CD4-positive, alpha-beta memory T cell (primary cell): ENCODE measurements at regions of chr20 and their contacts with region 1.

Region 1: GRCh38 chr20:13784893-13785715 is at the starts of genes ESF1 and NDUFAF5:
- DNase-seq: peak; percentile 92 to 95 (median 92)
- H3K4me3 ChIP-seq: peak within 1 kb of the TSS; percentile 91 to 97
- H3K4me3 Mint-ChIP-seq: peak within 1 kb of the TSS; percentile 98 to 100 (median 100)
- H3K27ac ChIP-seq: peak within 1 kb of the TSS; percentile 77
- H3K27ac Mint-ChIP-seq: peak within 1 kb of the TSS; percentile 90 to 99 (median 99)
- H3K4me1 ChIP-seq: peaks cover 27% of the 10 kb centered on the region
- H3K4me1 Mint-ChIP-seq: peaks cover 25 to 67% (median 47%) of the 10 kb centered on the region in 4 donors
- H3K27me3 ChIP-seq: no peaks in the 10 kb centered on the region
- H3K27me3 Mint-ChIP-seq: no peaks in the 10 kb centered on the region
- total RNA-seq, gene ESF1: 13.5 to 13.8 TPM
- total RNA-seq, gene NDUFAF5: 23.6 to 26.8 TPM

Region 2: DNA sequence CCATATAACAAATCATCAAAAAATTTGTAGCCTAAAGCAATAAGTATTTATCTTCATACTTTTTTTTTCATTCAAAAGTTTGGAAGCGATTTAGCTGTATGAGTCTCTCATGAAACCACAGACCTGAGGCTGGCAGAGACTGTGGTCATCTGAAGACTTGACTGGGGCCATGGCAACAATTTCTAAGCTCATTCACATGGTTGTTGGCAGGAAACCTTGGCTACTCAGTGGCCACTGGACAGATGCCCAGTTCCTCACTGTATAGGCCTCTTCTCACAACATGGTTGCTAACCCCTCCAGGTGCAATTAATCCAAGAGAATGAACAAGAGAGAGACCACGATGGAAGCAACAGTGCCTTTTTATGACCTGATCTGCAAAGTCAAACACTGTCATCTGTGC is 1631.5 kb before region 1 on chr20:
- CTCF ChIA-PET with region 1: no interaction called
- POLR2A ChIA-PET with region 1: no interaction called
- intact Hi-C with region 1: no loop called
- DNase-seq: peak in 1 of 5 donors; percentile 2
- H3K4me3 ChIP-seq: no peak overlapping the region
- H3K4me3 Mint-ChIP-seq: no peak overlapping the region
- H3K27ac ChIP-seq: no peak overlapping the region
- H3K27ac Mint-ChIP-seq: no peak overlapping the region
- H3K4me1 ChIP-seq: no peaks in the 10 kb centered on the region
- H3K4me1 Mint-ChIP-seq: no peaks in the 10 kb centered on the region
- H3K27me3 ChIP-seq: no peaks in the 10 kb centered on the region
- H3K27me3 Mint-ChIP-seq: no peaks in the 10 kb centered on the region

Region 3: GRCh38 chr20:12925214-12925755 is 859.8 kb before region 1 on chr20:
- CTCF ChIA-PET with region 1: no interaction called
- POLR2A ChIA-PET with region 1: no interaction called
- intact Hi-C with region 1: loop called (anchors 5 kb)
- DNase-seq: peak in 3 of 5 donors; percentile 2 to 42 (median 11)
- H3K4me3 ChIP-seq: no peak overlapping the region
- H3K4me3 Mint-ChIP-seq: no peak overlapping the region
- H3K27ac ChIP-seq: no peak overlapping the region
- H3K27ac Mint-ChIP-seq: no peak overlapping the region
- H3K4me1 ChIP-seq: no peaks in the 10 kb centered on the region
- H3K4me1 Mint-ChIP-seq: peaks cover 0 to 3% (median 0%) of the 10 kb centered on the region in 4 donors
- H3K27me3 ChIP-seq: no peaks in the 10 kb centered on the region
- H3K27me3 Mint-ChIP-seq: peaks cover 0 to 2% of the 10 kb centered on the region in 2 donors

Region 4: GRCh38 chr20:13221673-13222318 is 563.3 kb before region 1 on chr20:
- CTCF ChIA-PET with region 1: no interaction called
- POLR2A ChIA-PET with region 1: no interaction called
- intact Hi-C with region 1: loop called (anchors 10 kb)
- DNase-seq: peak; percentile 73 to 80 (median 78)
- H3K4me3 ChIP-seq: peak overlapping the region; percentile 52 to 60
- H3K4me3 Mint-ChIP-seq: peak overlapping the region; percentile 85 to 95 (median 88)
- H3K27ac ChIP-seq: peak overlapping the region; percentile 43
- H3K27ac Mint-ChIP-seq: peak overlapping the region; percentile 71 to 93 (median 89)
- H3K4me1 ChIP-seq: peaks cover 20% of the 10 kb centered on the region
- H3K4me1 Mint-ChIP-seq: peaks cover 7 to 31% (median 16%) of the 10 kb centered on the region in 4 donors
- H3K27me3 ChIP-seq: peaks cover 12% of the 10 kb centered on the region
- H3K27me3 Mint-ChIP-seq: peaks cover 6 to 20% of the 10 kb centered on the region in 2 donors

Region 5: GRCh38 chr20:13458860-13459451 is 326.1 kb before region 1 on chr20:
- CTCF ChIA-PET with region 1: no interaction called
- POLR2A ChIA-PET with region 1: no interaction called
- intact Hi-C with region 1: loop called (anchors 10 kb)
- DNase-seq: peak in 1 of 5 donors; percentile 0
- H3K4me3 ChIP-seq: no peak overlapping the region
- H3K4me3 Mint-ChIP-seq: no peak overlapping the region
- H3K27ac ChIP-seq: no peak overlapping the region
- H3K27ac Mint-ChIP-seq: no peak overlapping the region
- H3K4me1 ChIP-seq: no peaks in the 10 kb centered on the region
- H3K4me1 Mint-ChIP-seq: no peaks in the 10 kb centered on the region
- H3K27me3 ChIP-seq: no peaks in the 10 kb centered on the region
- H3K27me3 Mint-ChIP-seq: no peaks in the 10 kb centered on the region

Region 6: GRCh38 chr20:13638496-13639222 is 146.4 kb before region 1 on chr20 and contains the start of gene TASP1:
- CTCF ChIA-PET with region 1: interaction called, 3 read pairs
- POLR2A ChIA-PET with region 1: interaction called, 5 read pairs
- intact Hi-C with region 1: loop called (anchors 1 kb)
- DNase-seq: peak; percentile 94 to 98 (median 96)
- H3K4me3 ChIP-seq: peak within 1 kb of the TSS; percentile 59 to 90
- H3K4me3 Mint-ChIP-seq: peak within 1 kb of the TSS; percentile 84 to 93 (median 89)
- H3K27ac ChIP-seq: peak within 1 kb of the TSS; percentile 66
- H3K27ac Mint-ChIP-seq: peak within 1 kb of the TSS; percentile 84 to 95 (median 90)
- H3K4me1 ChIP-seq: peaks cover 14% of the 10 kb centered on the region
- H3K4me1 Mint-ChIP-seq: peaks cover 15 to 27% (median 17%) of the 10 kb centered on the region in 4 donors
- H3K27me3 ChIP-seq: no peaks in the 10 kb centered on the region
- H3K27me3 Mint-ChIP-seq: peaks cover 3 to 14% of the 10 kb centered on the region in 2 donors
- total RNA-seq, gene TASP1: 15.1 to 15.2 TPM

Region 7: GRCh38 chr20:13771853-13772453 is 13.2 kb before region 1 on chr20:
- CTCF ChIA-PET with region 1: interaction called, 38 read pairs
- POLR2A ChIA-PET with region 1: interaction called, 7 read pairs
- intact Hi-C with region 1: no loop called
- DNase-seq: peak in 4 of 5 donors; percentile 9 to 31 (median 26)
- H3K4me3 ChIP-seq: no peak overlapping the region
- H3K4me3 Mint-ChIP-seq: no peak overlapping the region
- H3K27ac ChIP-seq: no peak overlapping the region
- H3K27ac Mint-ChIP-seq: peak overlapping the region in 2 of 7 donors; percentile 29 to 30
- H3K4me1 ChIP-seq: peaks cover 2% of the 10 kb centered on the region
- H3K4me1 Mint-ChIP-seq: peaks cover 5 to 10% (median 7%) of the 10 kb centered on the region in 4 donors
- H3K27me3 ChIP-seq: no peaks in the 10 kb centered on the region
- H3K27me3 Mint-ChIP-seq: no peaks in the 10 kb centered on the region